Heart right ventricle (tissue), 16 donors: ENCODE measurements at regions of chr5 and their contacts with region 1.

Region 1: DNA sequence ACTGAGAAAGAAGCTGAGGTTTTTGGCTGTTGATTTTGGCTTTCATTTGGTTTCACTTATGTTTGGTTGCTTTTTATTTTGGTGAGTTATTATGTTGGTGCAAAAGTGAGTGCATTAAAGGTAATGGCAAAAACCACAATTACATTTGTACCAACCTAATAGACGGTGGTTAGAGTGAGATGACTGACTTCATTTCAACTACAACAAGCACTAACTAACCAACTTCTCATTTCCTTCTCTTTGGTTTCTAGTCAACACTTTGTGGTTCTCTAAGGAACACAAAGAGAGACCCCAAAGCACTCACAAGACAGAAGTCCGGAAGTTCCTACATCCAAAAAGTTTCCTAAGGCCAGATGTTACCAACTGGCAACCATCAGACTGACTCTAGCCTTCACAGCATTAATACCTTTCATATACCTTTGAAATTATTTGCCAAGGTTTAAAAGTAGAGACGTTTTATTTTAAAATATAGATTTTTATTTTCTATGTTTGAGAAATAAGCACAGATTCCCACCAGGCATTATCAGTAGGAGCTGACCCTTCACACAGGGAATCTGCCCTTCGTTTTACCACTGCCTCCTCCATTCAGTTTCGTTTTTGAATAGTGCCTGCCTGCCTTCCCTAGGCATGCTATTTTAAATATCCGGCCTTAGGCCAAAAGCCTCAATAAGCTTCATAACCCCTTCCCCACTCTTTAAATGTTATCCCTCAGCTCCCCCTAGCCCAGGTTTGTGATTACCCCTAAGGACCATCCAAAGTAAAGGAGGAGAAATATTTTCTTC is 301.1 kb upstream of the PTGER4 start:
- DNase-seq: no peak
- ATAC-seq: peak in 2 of 8 donors; percentile 22 to 58
- H3K4me3 ChIP-seq: no peak overlapping the region
- H3K27ac ChIP-seq: peak overlapping the region in 1 of 10 donors; percentile 16
- H3K4me1 ChIP-seq: peaks cover 0 to 25% (median 0%) of the 10 kb centered on the region in 9 donors
- H3K27me3 ChIP-seq: no peaks in the 10 kb centered on the region
- CTCF ChIP-seq: no peak

Region 2: GRCh38 chr5:40052808-40053207 is 325.8 kb before region 1 on chr5:
- intact Hi-C with region 1: no loop called
- DNase-seq: no peak
- ATAC-seq: no peak
- H3K4me3 ChIP-seq: no peak overlapping the region
- H3K27ac ChIP-seq: no peak overlapping the region
- H3K4me1 ChIP-seq: peaks cover 0 to 13% (median 0%) of the 10 kb centered on the region in 9 donors
- H3K27me3 ChIP-seq: no peaks in the 10 kb centered on the region
- CTCF ChIP-seq: no peak

Region 3: DNA sequence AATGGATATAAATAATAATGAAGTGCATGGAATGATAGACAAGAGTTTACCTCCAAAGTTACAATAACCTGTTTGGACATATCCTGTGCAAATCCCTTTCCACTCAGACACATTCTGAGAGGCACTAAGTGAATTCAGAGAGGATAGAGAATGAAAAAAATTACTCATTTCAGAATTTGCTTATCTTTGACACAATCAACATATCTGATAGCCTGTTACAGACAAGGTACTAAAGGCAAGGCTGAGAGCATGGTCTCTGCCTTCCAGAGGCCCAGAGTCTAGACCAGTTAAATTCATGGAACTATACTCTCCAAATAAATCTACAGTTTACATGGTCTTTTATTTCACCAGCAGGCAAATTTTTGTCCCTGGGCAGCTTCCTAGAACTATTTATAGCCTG is 70.7 kb before region 1 on chr5:
- intact Hi-C with region 1: loop called in 1 of 10 experiments (anchors 2 kb)
- DNase-seq: no peak
- ATAC-seq: no peak
- H3K4me3 ChIP-seq: no peak overlapping the region
- H3K27ac ChIP-seq: no peak overlapping the region
- H3K4me1 ChIP-seq: no peaks in the 10 kb centered on the region
- H3K27me3 ChIP-seq: no peaks in the 10 kb centered on the region
- CTCF ChIP-seq: no peak

Region 4: GRCh38 chr5:40446910-40447309 is 68.3 kb after region 1 on chr5:
- intact Hi-C with region 1: no loop called
- DNase-seq: no peak
- ATAC-seq: no peak
- H3K4me3 ChIP-seq: no peak overlapping the region
- H3K27ac ChIP-seq: no peak overlapping the region
- H3K4me1 ChIP-seq: peaks cover 0 to 6% (median 0%) of the 10 kb centered on the region in 9 donors
- H3K27me3 ChIP-seq: no peaks in the 10 kb centered on the region
- CTCF ChIP-seq: no peak